PC-9 (cell line): ENCODE measurements at regions of chr2 and their contacts with region 1.

Region 1: DNA sequence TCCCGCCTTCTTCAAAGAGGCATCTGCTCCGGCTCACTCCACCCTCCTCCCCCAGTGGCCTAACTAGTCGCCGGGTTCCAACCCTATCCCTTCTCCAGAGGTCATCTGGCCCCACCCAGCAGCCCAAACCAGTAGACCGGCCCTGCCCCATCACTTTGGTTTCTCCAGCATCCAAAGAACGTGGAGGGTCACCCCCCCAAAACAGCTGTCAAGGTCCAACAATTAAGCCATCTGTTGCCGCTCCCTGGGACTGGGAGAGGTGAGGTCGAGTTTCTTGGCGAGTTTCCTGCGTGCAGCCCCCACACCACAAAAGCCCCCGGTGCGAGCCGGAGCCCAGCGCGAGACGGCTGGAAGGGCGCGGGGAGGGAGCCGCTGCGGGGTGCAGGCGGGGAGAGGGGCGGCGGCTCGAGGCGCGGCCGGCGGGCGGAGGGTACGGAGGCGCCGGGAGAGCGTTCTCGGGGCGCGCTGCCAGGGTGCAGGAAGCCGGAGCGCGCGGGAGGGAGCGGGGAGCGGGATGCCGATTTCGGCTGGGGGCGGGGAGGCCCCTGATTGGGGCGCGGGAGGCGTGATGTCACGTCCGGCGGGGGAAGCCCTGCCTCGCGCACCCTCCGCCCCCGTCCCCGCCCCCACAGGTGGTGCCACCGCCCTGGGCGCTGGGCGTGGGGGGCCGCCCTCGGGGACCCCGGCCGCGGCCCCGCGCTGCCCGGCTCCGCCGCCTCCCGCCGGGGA is 571 bp upstream of the GPC1 start:
- DNase-seq: peak; percentile 79 to 99
- H3K4me3 ChIP-seq: peak overlapping the region; percentile 62
- H3K27ac ChIP-seq: peak overlapping the region; percentile 87
- H3K4me1 ChIP-seq: peaks cover 45% of the 10 kb centered on the region
- H3K27me3 ChIP-seq: no peaks in the 10 kb centered on the region
- CTCF ChIP-seq: no peak

Region 2: DNA sequence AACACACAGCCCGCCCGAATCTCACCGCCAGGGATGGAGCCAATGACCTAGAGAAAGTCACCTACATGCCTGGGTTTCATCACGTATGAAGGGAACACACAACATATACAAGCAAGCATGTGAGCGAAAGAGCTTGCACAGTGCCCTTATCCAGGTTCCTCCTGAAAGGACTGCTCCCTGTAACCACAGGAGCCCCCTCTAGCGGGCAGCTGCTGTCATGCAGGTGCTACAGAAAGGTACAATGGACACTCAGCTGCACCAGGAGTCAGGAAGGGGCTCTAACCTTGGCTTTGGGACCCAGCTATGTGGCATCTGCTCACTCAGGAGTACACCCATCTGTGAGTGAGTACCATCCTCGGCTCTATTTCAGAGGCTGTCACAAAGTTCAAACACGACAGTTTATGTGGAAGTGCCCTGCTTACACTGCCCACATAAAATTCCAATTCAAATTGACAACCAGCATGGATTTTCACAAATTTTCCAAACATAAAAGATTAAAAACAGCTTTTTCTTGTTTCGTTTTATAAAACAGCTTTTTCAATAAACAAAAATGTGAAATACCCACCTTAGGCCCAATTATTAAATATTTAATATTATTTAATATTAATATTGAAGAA is 413.3 kb before region 1 on chr2:
- CTCF ChIA-PET with region 1: no interaction called
- POLR2A ChIA-PET with region 1: interaction called, 28 read pairs
- intact Hi-C with region 1: no loop called
- DNase-seq: peak; percentile 47 to 75
- H3K4me3 ChIP-seq: no peak overlapping the region
- H3K27ac ChIP-seq: no peak overlapping the region
- H3K4me1 ChIP-seq: peaks cover 17% of the 10 kb centered on the region
- H3K27me3 ChIP-seq: no peaks in the 10 kb centered on the region
- CTCF ChIP-seq: peak; percentile 89

Region 3: DNA sequence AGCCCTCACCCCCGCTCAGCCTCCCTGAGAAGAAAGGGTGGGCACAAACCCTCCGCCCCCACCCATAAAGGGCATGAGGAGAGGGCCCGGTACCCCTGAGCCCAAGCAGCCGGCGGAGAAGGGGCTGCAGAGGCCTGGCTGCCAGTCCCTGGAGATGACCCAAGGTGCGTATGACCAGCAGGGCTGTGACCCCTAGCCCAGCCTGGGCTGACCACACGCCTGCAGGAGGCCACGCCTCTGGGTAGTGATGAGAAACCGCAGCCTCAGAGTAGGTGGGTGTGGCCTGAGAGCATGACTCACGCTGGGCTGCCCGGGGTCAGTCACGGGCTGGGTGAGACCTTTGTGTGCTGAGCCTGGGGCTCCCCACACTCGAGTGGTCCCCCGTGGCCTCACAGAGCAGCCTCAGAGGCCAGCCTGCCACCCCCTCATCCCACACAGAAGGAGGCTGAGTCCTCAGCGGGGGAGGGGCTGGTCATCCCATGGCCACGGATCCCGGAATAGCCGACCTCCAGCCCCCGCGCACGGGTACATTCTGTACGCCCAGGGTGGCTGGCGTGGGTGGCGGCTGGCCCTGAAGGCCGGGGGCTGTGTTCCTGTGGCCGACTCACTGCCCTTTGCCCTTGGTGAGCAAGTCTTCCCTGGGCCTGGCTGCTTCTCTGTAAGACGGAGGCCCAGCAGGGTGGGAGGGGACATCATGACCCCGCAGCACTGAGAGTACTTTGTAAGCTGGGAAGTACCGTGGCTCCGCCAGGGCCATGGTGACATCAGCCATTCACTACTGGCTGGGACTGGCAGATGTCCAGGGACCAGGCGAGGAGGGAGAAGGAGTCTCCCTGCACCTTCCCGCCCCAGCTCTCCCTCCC is 183.7 kb before region 1 on chr2:
- CTCF ChIA-PET with region 1: no interaction called
- POLR2A ChIA-PET with region 1: interaction called, 5 read pairs
- intact Hi-C with region 1: loop called (anchors 1 kb)
- DNase-seq: peak; percentile 92 to 98
- H3K4me3 ChIP-seq: peak overlapping the region; percentile 48; the same call in 1 of the 2 replicates
- H3K27ac ChIP-seq: peak overlapping the region; percentile 86
- H3K4me1 ChIP-seq: peaks cover 39% of the 10 kb centered on the region
- H3K27me3 ChIP-seq: no peaks in the 10 kb centered on the region
- CTCF ChIP-seq: no peak

Region 4: GRCh38 chr2:240369801-240370585 is 64.9 kb before region 1 on chr2:
- CTCF ChIA-PET with region 1: no interaction called
- POLR2A ChIA-PET with region 1: interaction called, 39 read pairs
- intact Hi-C with region 1: loop called (anchors 1 kb)
- DNase-seq: peak; percentile 96 to 100
- H3K4me3 ChIP-seq: peak overlapping the region; percentile 36; the same call in 1 of the 2 replicates
- H3K27ac ChIP-seq: peak overlapping the region; percentile 83
- H3K4me1 ChIP-seq: peaks cover 57% of the 10 kb centered on the region
- H3K27me3 ChIP-seq: no peaks in the 10 kb centered on the region
- CTCF ChIP-seq: no peak

Region 5: GRCh38 chr2:240458463-240459391 is 23.8 kb after region 1 on chr2:
- CTCF ChIA-PET with region 1: no interaction called
- POLR2A ChIA-PET with region 1: interaction called, 4 read pairs
- intact Hi-C with region 1: loop called (anchors 1 kb)
- DNase-seq: no peak
- H3K4me3 ChIP-seq: no peak overlapping the region; the same call in 1 of the 2 replicates
- H3K27ac ChIP-seq: peak overlapping the region; percentile 84
- H3K4me1 ChIP-seq: peaks cover 56% of the 10 kb centered on the region
- H3K27me3 ChIP-seq: no peaks in the 10 kb centered on the region
- CTCF ChIP-seq: no peak

Region 6: GRCh38 chr2:240655931-240656886 is 221.3 kb after region 1 on chr2:
- CTCF ChIA-PET with region 1: no interaction called
- POLR2A ChIA-PET with region 1: no interaction called
- intact Hi-C with region 1: no loop called
- DNase-seq: no peak
- H3K4me3 ChIP-seq: no peak overlapping the region
- H3K27ac ChIP-seq: no peak overlapping the region
- H3K4me1 ChIP-seq: no peaks in the 10 kb centered on the region
- H3K27me3 ChIP-seq: peaks cover 95% of the 10 kb centered on the region
- CTCF ChIP-seq: no peak